ENCODE measurements at regions of chr9 and their contacts with region 1.

Region 1: GRCh38 chr9:96080364-96080763 is 204.9 kb downstream of the ERCC6L2 start:
- DNase-seq: peak; percentile 54 to 73
- H3K4me3 ChIP-seq: no peak overlapping the region
- CTCF ChIP-seq: no peak
- POLR2A ChIP-seq: no peak

Region 2: GRCh38 chr9:94182532-94182931 is 1897.8 kb before region 1 on chr9:
- intact Hi-C with region 1: loop called (anchors 10 kb)
- DNase-seq: no peak
- H3K4me3 ChIP-seq: no peak overlapping the region
- CTCF ChIP-seq: no peak
- POLR2A ChIP-seq: no peak

Region 3: DNA sequence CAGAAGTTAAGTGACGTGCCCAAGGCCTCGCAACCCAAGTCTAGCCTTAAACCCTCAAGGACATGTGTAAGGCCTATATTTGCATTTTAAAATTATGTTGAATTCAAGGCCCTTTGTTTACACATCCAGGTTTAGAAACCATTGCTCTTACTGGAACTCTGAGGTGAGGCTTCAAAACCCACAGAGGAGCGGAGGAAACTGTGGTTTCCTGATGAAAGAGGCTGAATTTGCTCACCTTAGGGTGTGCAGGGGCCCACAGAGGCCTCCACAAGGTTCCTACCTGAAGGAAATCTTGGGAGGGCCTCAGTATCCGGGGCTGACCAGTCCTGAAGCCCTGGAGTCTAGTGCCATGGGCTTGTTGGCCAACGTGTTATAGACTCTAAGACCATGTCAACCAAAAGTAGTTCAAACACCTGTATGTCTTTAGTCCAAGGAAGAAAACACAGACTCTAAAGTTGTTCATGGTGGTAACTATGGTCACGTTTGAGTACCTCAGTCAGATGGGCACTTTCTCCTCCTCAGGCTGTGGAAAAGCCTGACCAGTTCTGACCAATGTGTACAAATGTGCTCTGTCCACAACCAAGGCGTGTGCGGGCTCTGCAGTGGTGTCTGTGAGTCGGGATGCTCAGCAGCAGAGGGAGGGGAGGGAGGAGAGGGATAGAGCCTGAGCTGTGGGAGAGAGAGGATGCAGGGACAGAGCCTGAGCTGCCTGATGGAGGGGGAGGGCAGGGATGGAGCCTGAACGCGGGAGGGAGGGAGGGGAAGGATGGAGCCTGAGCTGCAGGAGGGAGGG is 329.4 kb before region 1 on chr9:
- intact Hi-C with region 1: no loop called
- DNase-seq: no peak
- H3K4me3 ChIP-seq: no peak overlapping the region
- CTCF ChIP-seq: no peak
- POLR2A ChIP-seq: no peak

Region 4: GRCh38 chr9:96031366-96031824 is 49.0 kb before region 1 on chr9:
- intact Hi-C with region 1: no loop called
- DNase-seq: peak in 1 of 2 donors; percentile 87
- H3K4me3 ChIP-seq: no peak overlapping the region
- CTCF ChIP-seq: no peak
- POLR2A ChIP-seq: no peak

Region 5: DNA sequence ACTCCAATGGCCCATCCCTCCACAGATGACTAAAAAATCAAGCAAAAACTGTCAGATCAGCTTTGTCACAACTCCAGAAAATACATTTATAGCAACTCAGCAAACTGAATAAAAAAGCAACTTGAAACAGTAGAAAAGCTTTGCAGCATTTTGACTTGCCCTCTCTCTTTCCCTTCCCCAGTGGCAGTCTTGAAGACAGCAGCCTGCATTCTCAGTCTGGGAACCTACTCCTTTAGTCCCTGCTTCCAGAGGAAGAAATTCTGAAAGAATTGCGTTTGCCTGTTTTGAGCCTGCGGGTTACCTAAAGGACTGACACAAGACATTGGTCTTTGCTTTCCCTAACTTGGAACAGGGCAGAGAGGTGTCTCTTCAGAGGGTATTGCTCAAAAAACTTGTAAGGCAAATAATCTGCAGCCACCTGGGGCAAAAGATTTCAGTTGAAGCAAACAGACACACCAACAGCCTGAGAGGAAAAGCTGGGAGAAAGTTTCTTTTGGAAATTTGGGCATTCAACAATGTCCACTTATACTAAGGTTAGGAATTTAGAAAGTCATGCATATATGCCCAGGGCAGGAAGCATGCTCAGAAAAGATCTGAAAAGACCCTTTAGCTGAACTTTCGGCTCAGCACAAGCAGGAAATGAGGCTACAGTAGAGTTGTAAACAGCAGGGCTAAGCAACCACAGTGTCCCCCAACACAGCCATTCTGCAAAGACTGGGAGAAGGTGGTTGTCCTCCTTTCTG is 318.4 kb after region 1 on chr9:
- intact Hi-C with region 1: no loop called
- DNase-seq: no peak
- H3K4me3 ChIP-seq: no peak overlapping the region
- CTCF ChIP-seq: no peak
- POLR2A ChIP-seq: no peak